ENCODE measurements at regions of chr5 and their contacts with region 1.

Region 1: DNA sequence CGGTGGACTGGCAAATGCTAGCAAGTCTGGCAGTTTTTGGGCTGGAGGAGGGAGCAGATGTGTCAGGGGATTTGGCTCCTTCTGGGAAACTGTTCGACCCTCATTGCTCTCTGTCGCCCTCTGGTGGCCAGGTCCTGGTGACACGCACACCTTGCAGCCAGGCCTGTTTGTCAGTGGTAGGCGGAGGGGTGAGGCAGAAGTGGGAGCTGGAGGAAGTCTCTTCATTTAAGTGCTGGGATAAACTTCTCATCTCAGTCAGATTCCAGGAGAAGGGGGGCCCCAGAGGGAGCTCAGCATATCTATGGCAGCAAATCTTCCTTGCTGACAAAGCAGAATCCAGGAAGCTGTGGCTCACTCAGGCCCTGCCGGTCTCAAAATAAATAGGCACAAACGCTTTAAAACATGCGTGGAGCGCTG is 326.5 kb downstream of the ZSWIM6 start:
- DNase-seq: peak; percentile 76 to 96 (median 90)

Region 2: GRCh38 chr5:61162010-61162831 is 496.4 kb before region 1 on chr5 and contains the start of gene SMIM15:
- intact Hi-C with region 1: loop called (anchors 10 kb)
- DNase-seq: peak; percentile 64 to 94 (median 86)

Region 3: GRCh38 chr5:61719124-61719523 is 60.5 kb after region 1 on chr5:
- intact Hi-C with region 1: no loop called
- DNase-seq: peak in 2 of 42 donors; percentile 9 to 28